CD4-positive, alpha-beta T cell (primary cell): ENCODE measurements at regions of chr1 and their contacts with region 1.

Region 1: GRCh38 chr1:224168859-224169380 is 14.1 kb upstream of the DEGS1 start:
- DNase-seq: peak in 5 of 14 experiments; percentile 17 to 86 (median 77)
- ATAC-seq: peak; percentile 91
- H3K4me3 ChIP-seq: no peak overlapping the region
- H3K4me3 Mint-ChIP-seq: peak overlapping the region; percentile 36
- H3K27ac ChIP-seq: no peak overlapping the region
- H3K27ac Mint-ChIP-seq: peak overlapping the region; percentile 21
- H3K4me1 ChIP-seq: peaks cover 28% of the 10 kb centered on the region
- H3K4me1 Mint-ChIP-seq: peaks cover 32% of the 10 kb centered on the region
- H3K27me3 ChIP-seq: no peaks in the 10 kb centered on the region
- H3K27me3 Mint-ChIP-seq: no peaks in the 10 kb centered on the region
- CTCF ChIP-seq: no peak

Region 2: DNA sequence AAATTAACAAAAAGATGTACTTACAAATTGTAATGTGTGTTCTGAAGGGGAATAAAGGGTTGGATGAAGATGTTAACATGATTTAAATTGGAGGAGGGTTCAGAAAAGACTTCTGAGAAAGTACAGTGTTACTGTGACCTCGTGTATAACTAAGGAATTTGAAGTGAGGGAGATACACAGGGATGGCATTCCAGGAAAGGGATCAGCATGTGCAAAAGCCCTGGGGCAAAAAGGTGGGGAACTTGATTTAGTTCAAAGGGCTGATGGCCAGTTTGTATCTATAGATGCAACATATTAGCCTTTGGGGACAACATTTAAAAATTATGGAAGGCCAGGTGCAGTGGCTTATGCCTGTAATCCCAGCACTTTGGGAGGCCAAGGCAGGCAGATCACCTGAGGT is 19.2 kb before region 1 on chr1:
- CTCF ChIA-PET with region 1: interaction called, 12 read pairs
- POLR2A ChIA-PET with region 1: interaction called, 4 read pairs
- intact Hi-C with region 1: no loop called
- DNase-seq: no peak
- ATAC-seq: no peak
- H3K4me3 ChIP-seq: no peak overlapping the region
- H3K4me3 Mint-ChIP-seq: no peak overlapping the region
- H3K27ac ChIP-seq: no peak overlapping the region
- H3K27ac Mint-ChIP-seq: no peak overlapping the region
- H3K4me1 ChIP-seq: no peaks in the 10 kb centered on the region
- H3K4me1 Mint-ChIP-seq: peaks cover 15% of the 10 kb centered on the region
- H3K27me3 ChIP-seq: no peaks in the 10 kb centered on the region
- H3K27me3 Mint-ChIP-seq: no peaks in the 10 kb centered on the region
- CTCF ChIP-seq: no peak

Region 3: GRCh38 chr1:224245188-224245587 is 76.3 kb after region 1 on chr1:
- CTCF ChIA-PET with region 1: no interaction called
- POLR2A ChIA-PET with region 1: no interaction called
- intact Hi-C with region 1: loop called in 1 of 2 experiments (anchors 2 kb)
- DNase-seq: peak in 10 of 14 experiments; percentile 1 to 70 (median 10)
- ATAC-seq: peak; percentile 85
- H3K4me3 ChIP-seq: no peak overlapping the region
- H3K4me3 Mint-ChIP-seq: peak overlapping the region; percentile 70
- H3K27ac ChIP-seq: peak overlapping the region; percentile 30 to 76
- H3K27ac Mint-ChIP-seq: peak overlapping the region; percentile 93
- H3K4me1 ChIP-seq: peaks cover 14% of the 10 kb centered on the region
- H3K4me1 Mint-ChIP-seq: peaks cover 18% of the 10 kb centered on the region
- H3K27me3 ChIP-seq: no peaks in the 10 kb centered on the region
- H3K27me3 Mint-ChIP-seq: no peaks in the 10 kb centered on the region
- CTCF ChIP-seq: no peak